Cardiac septum (tissue), 1 donor: ENCODE measurements at regions of chr17 and their contacts with region 1.

Region 1: DNA sequence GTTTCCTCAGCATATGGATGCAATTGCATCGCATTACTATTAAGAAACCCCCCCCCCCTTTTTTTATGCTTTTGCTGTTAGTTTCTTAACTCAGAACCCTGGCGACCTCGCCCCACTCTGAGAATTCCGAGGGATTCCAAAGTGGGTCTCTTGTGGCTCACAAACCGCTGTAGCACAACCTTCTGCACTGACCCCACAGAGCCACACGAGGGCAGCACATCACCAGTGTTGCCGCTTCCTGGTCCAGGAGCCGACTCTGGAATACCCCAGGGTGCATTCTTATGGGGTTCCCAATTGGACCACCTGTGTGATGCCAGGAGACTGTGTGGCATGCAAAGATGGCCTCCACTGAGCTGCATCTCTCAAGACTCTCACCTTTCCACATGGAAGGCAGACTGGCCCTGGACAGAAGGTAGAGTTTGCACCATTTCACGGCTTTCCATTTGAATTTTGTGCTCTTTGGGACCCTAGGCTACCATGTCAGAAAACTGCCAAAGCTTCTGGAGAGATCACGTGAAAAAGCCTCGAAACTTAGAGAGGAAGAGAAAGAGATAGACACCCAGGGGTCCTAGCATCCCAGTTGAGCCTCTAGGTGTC is 432.7 kb upstream of the ASIC2 start:
- DNase-seq: no peak

Region 2: GRCh38 chr17:33750943-33751701 is 25.3 kb after region 1 on chr17:
- intact Hi-C with region 1: loop called (anchors 2 kb)
- DNase-seq: no peak

Region 3: GRCh38 chr17:33769066-33769465 is 43.3 kb after region 1 on chr17:
- intact Hi-C with region 1: no loop called
- DNase-seq: no peak